ENCODE measurements at regions of chrX and their contacts with region 1.

Region 1: DNA sequence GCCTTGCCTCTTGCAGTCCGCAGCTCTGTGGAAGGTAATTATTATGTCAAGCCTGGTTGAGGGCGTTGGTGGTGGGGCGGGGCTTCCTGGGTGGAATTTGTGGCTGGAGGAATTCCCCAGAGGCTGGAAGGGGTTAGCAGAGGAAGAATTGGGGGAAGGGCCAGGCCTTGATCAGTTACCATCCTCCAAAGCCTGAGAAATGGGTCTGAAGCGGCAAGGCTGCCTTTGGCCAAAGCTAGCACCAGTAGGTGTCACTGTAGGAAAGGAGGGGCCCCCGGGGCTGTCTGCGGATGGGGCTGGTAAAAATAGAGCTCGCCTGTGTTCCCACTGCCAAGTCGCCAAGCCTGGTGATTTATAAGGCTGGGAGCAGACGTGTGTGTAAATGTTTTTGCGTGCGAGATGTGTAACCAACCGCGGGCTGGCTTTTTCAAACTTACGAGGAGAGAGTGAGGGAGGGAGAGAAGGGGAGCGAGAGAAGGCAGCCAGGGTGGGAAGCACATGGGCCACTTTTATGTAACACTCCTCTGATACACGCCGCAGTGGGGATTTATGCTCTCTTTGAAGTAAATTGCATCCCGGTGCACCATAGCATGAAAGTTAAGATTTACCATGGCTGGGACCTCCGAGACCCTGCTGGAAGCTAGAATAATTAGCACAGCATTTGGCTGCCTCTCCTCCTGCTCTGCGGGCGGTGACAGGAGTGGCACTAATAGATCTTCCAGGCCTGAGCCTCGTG is 366.9 kb downstream of the BCOR start:
- DNase-seq: peak; percentile 75
- H3K4me3 Mint-ChIP-seq: peak overlapping the region; percentile 45
- H3K27ac Mint-ChIP-seq: no peak overlapping the region
- H3K4me1 Mint-ChIP-seq: peaks cover 17% of the 10 kb centered on the region
- H3K27me3 Mint-ChIP-seq: no peaks in the 10 kb centered on the region

Region 2: GRCh38 chrX:40006106-40007017 is 275.5 kb after region 1 on chrX:
- CTCF ChIA-PET with region 1: no interaction called
- intact Hi-C with region 1: loop called (anchors 10 kb)
- DNase-seq: peak; percentile 47
- H3K4me3 Mint-ChIP-seq: peak overlapping the region; percentile 36
- H3K27ac Mint-ChIP-seq: no peak overlapping the region
- H3K4me1 Mint-ChIP-seq: peaks cover 28% of the 10 kb centered on the region
- H3K27me3 Mint-ChIP-seq: peaks cover 37% of the 10 kb centered on the region

Measured in activated naive CD4-positive, alpha-beta T cell treated with anti-CD3 and anti-CD28 coated beads for 36 hours (primary cell).